ENCODE measurements at regions of chr16 and their contacts with region 1.

Region 1: DNA sequence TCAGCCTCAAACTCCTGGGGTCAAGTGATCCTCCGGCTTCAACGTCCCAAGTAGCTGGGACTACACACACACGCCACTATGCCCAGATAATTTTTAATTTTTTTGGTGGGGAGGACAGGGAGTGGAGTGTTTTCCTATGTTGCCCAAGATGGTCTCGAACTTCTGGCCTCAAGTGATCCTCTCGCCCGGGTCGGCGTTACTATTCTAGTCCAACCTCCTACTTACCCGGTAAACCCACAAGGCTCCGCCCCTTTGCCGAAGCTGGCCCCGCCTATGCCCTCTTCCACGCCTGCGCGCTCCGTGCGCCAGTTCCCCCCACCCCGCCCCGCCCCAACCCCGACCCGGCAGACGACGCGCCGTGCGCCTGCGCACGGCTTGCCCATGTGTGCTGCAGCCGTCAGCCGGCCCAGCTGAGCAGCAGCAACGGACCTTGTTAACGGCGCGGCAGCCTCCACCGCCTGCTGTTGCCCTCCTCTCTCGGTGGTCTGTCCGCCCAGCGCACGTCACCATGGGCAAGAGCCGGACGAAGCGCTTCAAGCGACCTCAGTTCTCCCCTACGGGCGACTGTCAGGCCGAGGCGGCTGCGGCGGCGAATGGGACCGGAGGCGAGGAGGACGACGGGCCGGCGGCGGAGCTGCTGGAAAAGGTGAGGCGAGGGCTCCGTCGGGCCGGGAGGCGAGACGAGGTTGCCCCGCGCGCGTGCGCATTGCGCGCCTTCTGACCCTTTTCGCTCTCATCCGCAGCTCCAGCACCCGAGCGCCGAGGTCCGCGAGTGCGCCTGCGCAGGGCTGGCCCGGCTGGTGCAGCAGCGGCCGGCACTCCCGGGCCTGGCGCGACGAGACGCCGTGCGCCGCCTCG is at the start of gene HEATR3:
- H3K4me3 Mint-ChIP-seq: peak within 1 kb of the TSS; percentile 80
- H3K27ac Mint-ChIP-seq: peak within 1 kb of the TSS; percentile 94
- H3K4me1 Mint-ChIP-seq: peaks cover 33% of the 10 kb centered on the region
- H3K27me3 Mint-ChIP-seq: no peaks in the 10 kb centered on the region

Region 2: DNA sequence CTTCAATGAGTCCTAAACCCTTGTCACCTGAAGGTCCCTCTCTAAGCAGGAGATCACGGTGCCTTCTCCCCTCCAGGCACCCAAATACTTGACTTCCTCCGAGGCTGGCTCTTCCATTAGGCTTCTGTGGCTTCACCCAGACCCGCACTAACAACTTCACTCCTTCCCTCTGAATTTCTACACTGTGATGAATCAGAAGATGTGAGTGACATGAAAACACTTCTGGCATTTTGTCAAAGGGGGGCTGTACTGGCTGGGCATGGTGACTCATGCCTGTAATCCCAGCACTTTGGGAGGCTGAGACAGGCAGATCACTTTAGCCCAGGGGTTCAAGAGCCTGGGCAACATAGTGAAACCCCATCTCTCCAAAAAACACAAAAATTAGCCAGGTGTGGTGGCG is 113.5 kb before region 1 on chr16:
- intact Hi-C with region 1: no loop called
- H3K4me3 Mint-ChIP-seq: no peak overlapping the region
- H3K27ac Mint-ChIP-seq: no peak overlapping the region
- H3K4me1 Mint-ChIP-seq: no peaks in the 10 kb centered on the region
- H3K27me3 Mint-ChIP-seq: peaks cover 3% of the 10 kb centered on the region

Region 3: GRCh38 chr16:50038756-50039529 is 26.9 kb before region 1 on chr16:
- intact Hi-C with region 1: loop called (anchors 1 kb)
- H3K4me3 Mint-ChIP-seq: peak overlapping the region; percentile 27
- H3K27ac Mint-ChIP-seq: peak overlapping the region; percentile 83
- H3K4me1 Mint-ChIP-seq: peaks cover 40% of the 10 kb centered on the region
- H3K27me3 Mint-ChIP-seq: no peaks in the 10 kb centered on the region

Region 4: DNA sequence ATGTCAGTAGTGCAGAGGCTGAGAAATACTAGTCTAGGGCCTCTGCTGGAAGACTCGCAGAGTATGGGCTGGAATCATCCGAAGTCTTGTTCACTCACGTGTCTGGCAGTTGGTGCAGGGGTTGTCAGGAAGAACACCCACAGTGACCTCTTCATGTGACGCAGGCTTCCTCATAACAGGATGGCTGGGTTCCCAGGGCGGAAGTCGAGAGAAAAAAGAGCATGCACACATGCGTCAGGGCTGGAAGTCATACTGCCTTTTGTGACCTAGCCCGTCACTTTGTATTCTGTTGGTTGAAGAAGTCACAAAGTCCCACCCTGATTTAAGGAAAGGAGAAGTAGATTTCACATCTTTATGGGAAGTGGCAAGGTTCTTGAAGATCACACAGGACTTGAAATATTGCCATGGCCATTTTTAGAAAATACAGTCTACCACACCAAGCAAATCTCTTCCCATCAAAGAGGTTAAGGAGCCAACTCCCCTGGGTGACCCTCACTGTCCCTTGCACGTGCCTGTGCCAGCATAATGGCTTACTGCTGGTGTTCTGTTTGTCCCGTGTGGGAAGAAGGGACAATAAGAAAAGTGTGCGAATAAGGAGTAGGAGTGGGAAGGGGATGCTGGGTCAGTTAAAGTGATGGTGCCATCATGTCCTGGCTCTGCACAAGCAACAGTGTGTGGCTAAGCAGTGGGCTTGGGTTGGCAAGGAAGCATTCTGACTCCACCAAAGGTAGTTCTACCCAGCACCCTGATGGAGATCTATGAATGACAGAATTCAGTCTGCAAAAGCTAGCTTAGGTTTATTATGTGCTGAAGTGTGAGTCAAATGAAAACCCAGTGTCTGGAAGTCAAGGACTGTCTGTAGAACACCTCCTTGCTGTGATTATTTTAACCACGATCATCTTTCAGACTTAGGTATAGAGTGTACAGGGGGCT is 28.0 kb after region 1 on chr16:
- intact Hi-C with region 1: loop called (anchors 2 kb)
- H3K4me3 Mint-ChIP-seq: peak overlapping the region; percentile 39
- H3K27ac Mint-ChIP-seq: peak overlapping the region; percentile 87
- H3K4me1 Mint-ChIP-seq: peaks cover 12% of the 10 kb centered on the region
- H3K27me3 Mint-ChIP-seq: no peaks in the 10 kb centered on the region

Region 5: DNA sequence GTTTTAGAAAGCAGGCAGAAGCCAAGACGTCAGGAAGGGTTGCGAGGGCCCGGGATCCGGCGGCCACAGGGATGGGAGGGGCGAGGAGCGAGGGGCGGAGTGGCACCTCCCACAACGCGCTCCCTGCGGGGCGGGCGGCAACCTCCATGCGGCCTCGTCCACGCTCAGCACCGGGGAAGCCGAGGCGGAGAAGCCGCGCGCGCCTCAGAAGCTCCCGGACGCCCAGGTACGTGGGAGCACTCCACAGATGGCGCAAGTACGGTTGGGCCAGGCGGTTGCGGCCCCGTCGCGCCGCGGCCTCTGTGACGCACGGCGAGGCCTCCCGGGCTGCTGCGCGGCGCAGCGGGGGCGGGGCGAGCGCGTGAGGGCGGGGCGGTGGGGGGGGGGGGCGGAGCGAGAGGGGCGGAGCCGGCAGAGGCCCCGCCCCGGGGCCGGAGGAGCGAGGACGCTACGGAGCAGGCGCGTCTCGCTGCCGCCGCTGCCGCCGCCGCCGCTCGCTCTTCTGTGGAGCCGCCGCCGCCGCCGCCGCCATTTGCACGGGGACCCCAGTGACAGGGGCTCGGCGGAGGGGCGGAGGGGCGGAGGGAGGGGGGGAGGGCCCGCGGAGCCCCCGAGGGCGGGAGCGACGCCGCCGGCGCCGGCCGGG is 87.1 kb after region 1 on chr16 and contains the start of gene TENT4B:
- intact Hi-C with region 1: loop called (anchors 1 kb)
- H3K4me3 Mint-ChIP-seq: peak within 1 kb of the TSS; percentile 93
- H3K27ac Mint-ChIP-seq: peak within 1 kb of the TSS; percentile 91
- H3K4me1 Mint-ChIP-seq: peaks cover 33% of the 10 kb centered on the region
- H3K27me3 Mint-ChIP-seq: no peaks in the 10 kb centered on the region

Region 6: GRCh38 chr16:50360033-50360778 is 294.4 kb after region 1 on chr16:
- intact Hi-C with region 1: no loop called
- H3K4me3 Mint-ChIP-seq: no peak overlapping the region
- H3K27ac Mint-ChIP-seq: no peak overlapping the region
- H3K4me1 Mint-ChIP-seq: peaks cover 23% of the 10 kb centered on the region
- H3K27me3 Mint-ChIP-seq: no peaks in the 10 kb centered on the region

Region 7: DNA sequence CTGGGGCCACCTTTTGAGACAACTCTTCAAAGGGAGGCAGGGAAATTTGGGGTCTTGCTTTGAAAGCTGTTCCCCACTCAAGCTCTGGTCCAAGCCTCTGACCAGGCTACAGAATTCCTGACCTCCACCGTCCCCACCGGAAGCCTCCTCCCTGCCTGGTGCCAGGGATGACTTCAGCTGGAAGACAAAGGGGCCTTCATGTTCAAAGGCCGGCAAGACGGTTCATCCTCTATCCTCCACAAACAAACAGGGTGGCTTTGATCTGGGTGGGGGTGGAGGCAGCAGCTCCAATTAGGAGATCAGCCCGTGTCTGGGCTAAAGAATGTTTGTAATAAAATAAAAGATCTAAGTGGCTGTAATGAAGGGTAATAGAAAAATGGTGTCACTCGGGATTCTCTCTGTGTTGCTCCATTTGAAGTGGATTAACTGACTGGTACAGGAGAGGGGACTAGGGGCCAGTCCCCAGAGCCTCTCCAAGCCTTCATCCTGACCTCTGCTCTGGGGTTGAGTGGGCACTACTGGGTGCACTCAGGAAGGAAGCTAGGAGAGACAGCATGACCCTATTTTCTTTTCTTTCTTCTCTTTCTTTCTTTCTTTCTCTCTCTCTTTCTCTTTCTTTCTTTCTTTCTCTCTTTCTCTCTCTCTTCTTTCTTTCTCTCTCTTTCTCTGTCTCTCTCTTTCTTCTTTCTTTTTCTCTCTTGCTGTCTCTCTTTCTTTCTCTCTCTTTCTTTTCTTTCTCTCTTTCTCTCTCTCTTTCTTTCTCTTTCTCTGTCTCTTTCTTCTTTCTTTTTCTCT is 454.8 kb after region 1 on chr16:
- intact Hi-C with region 1: no loop called
- H3K4me3 Mint-ChIP-seq: no peak overlapping the region
- H3K27ac Mint-ChIP-seq: no peak overlapping the region
- H3K4me1 Mint-ChIP-seq: no peaks in the 10 kb centered on the region
- H3K27me3 Mint-ChIP-seq: peaks cover 22% of the 10 kb centered on the region